Right ventricle myocardium inferior (tissue), 1 donor: ENCODE measurements at regions of chr9 and their contacts with region 1.

Region 1: GRCh38 chr9:118059484-118060278 is 355.5 kb downstream of the TLR4 start:
- DNase-seq: peak; percentile 45
- ATAC-seq: no peak

Region 2: GRCh38 chr9:117800389-117800788 is 259.3 kb before region 1 on chr9:
- intact Hi-C with region 1: no loop called
- DNase-seq: no peak
- ATAC-seq: no peak

Region 3: DNA sequence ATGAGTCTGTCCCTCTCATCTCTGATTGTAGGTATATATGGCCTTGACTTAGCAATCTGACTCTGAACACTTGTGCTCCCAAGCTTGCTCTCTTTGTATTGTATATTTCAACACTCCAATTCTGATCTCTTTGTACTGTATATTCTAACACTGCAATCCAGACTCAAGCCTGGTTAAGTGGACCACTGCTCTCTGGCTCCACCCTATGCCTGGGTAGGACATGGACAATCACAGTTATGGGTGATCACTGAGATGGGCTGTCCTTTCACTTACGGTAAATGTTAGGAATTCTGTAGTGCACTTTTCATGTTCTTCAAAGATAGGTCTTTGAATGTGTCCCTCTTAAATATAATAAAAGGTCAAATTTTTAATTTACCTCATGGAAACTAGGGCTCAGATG is 190.4 kb before region 1 on chr9:
- intact Hi-C with region 1: no loop called
- DNase-seq: no peak
- ATAC-seq: no peak

Region 4: GRCh38 chr9:118088075-118088474 is 28.4 kb after region 1 on chr9:
- intact Hi-C with region 1: no loop called
- DNase-seq: no peak
- ATAC-seq: no peak

Region 5: GRCh38 chr9:119453490-119453911 is 1393.8 kb after region 1 on chr9:
- intact Hi-C with region 1: loop called (anchors 5 kb)
- DNase-seq: no peak
- ATAC-seq: no peak